Activated CD8-positive, alpha-beta T cell treated with anti-CD3 and anti-CD28 coated beads for 36 hours (primary cell): ENCODE measurements at regions of chr16 and their contacts with region 1.

Region 1: GRCh38 chr16:84617791-84618580 is at the start of gene COTL1:
- DNase-seq: peak; percentile 99
- ATAC-seq: peak; percentile 82
- H3K4me3 Mint-ChIP-seq: peak within 1 kb of the TSS; percentile 97
- H3K27ac Mint-ChIP-seq: peak within 1 kb of the TSS; percentile 86
- H3K4me1 Mint-ChIP-seq: peaks cover 36% of the 10 kb centered on the region
- H3K27me3 Mint-ChIP-seq: no peaks in the 10 kb centered on the region
- CTCF ChIP-seq: no peak
- total RNA-seq, gene COTL1: 664 to 677 TPM

Region 2: DNA sequence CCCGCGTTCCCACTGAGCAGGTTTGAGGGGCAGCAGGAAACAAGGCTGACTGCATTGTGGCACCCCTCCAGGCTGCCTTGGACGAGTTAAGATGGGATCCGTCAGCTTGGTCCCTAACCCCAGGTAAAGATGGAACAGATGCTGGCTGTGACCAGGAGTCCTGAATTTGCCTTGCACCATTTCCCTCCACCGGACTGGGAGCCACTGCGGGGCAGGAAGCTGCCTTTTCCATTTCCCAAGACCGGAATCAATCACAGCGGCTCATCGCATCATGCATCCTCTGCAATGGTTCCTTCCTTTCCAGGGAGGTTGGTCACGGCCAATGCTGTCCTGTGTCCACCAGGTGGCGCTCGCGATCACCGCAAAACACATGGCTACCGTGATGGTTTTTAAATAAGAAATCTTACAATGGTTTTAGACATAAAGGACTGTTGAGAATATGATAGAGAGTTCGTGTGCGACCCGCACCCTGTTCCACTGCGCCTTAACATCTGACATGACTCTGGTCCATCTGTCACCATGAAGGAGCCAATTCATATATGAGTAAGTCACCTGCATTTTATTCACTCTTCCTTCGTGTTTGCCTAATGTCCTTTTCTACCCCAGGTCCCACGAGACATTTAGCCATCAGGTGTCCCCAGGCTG is 106.7 kb before region 1 on chr16:
- CTCF ChIA-PET with region 1: interaction called, 145 read pairs
- POLR2A ChIA-PET with region 1: interaction called, 19 read pairs
- intact Hi-C with region 1: loop called (anchors 1 kb)
- DNase-seq: peak; percentile 92
- ATAC-seq: peak; percentile 9
- H3K4me3 Mint-ChIP-seq: peak overlapping the region; percentile 39
- H3K27ac Mint-ChIP-seq: peak overlapping the region; percentile 80
- H3K4me1 Mint-ChIP-seq: peaks cover 74% of the 10 kb centered on the region
- H3K27me3 Mint-ChIP-seq: no peaks in the 10 kb centered on the region
- CTCF ChIP-seq: peak; percentile 94

Region 3: DNA sequence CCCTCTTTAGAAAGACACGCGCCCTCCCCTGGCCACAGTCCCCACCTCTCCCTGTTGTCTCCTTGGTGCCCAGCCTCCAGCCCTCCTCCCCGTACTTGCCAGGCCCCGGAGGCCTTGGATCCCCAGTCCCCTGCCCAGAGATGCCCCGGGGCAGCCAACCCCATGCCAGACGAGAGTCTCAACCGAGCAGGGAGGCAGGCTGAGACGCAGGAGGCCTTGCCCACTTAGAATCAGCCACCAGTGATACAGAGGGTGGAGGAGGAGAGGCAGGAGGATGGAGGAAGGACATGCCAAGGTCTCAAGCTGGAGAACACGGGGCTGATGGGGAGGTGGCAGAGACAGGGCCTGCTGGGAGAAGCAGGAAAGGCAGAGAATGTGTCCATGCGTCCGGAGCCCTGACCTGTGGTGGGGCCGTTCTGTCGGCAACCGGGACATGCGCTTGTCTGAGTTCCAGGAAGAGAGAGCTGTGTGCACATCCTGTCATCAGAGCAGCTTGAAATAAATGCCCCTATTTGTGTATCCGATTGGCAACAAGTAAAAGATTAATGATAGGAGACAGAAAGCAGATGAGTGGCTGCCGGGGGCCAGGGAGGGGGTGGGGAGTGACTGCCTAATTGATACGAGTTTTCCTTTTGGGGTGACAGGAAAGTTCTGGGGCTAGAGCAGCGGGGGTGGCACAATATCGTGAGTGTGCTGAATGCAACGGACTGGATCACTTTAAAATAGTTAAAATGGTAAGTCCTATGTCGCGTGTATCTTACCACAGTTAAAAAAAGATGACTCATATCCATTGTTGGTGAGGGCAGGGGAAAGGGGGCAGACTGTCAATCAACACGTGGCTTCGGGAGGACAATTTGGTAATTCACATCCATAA is 68.8 kb before region 1 on chr16:
- CTCF ChIA-PET with region 1: interaction called, 14 read pairs
- POLR2A ChIA-PET with region 1: interaction called, 16 read pairs
- intact Hi-C with region 1: loop called (anchors 5 kb)
- DNase-seq: peak; percentile 82
- ATAC-seq: peak; percentile 57
- H3K4me3 Mint-ChIP-seq: peak overlapping the region; percentile 84
- H3K27ac Mint-ChIP-seq: peak overlapping the region; percentile 98
- H3K4me1 Mint-ChIP-seq: peaks cover 54% of the 10 kb centered on the region
- H3K27me3 Mint-ChIP-seq: no peaks in the 10 kb centered on the region
- CTCF ChIP-seq: peak; percentile 19

Region 4: DNA sequence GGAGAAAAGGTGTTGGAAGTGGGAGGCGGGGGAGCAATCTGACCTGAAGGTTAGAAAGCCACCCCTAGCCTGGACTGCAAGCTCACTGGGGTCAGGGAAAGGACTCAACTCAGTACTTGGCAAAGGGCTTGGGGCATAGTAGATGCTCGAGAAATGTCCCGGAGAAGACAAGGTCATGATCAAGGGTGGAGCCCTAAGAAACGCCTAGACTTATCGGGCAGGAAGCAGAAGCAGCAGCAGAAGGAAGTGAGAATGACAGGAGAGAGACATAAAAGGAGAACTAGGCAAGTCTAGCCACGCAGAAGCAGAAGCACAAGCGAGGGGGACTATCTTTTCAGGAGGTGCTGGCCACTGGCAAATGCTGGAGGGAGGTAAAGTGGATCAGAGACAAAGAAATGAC is 10.3 kb before region 1 on chr16:
- CTCF ChIA-PET with region 1: interaction called, 24 read pairs
- POLR2A ChIA-PET with region 1: interaction called, 94 read pairs
- intact Hi-C with region 1: loop called (anchors 1 kb)
- DNase-seq: no peak
- ATAC-seq: peak; percentile 17
- H3K4me3 Mint-ChIP-seq: peak overlapping the region; percentile 43
- H3K27ac Mint-ChIP-seq: peak overlapping the region; percentile 81
- H3K4me1 Mint-ChIP-seq: peaks cover 92% of the 10 kb centered on the region
- H3K27me3 Mint-ChIP-seq: no peaks in the 10 kb centered on the region
- CTCF ChIP-seq: no peak

Region 5: DNA sequence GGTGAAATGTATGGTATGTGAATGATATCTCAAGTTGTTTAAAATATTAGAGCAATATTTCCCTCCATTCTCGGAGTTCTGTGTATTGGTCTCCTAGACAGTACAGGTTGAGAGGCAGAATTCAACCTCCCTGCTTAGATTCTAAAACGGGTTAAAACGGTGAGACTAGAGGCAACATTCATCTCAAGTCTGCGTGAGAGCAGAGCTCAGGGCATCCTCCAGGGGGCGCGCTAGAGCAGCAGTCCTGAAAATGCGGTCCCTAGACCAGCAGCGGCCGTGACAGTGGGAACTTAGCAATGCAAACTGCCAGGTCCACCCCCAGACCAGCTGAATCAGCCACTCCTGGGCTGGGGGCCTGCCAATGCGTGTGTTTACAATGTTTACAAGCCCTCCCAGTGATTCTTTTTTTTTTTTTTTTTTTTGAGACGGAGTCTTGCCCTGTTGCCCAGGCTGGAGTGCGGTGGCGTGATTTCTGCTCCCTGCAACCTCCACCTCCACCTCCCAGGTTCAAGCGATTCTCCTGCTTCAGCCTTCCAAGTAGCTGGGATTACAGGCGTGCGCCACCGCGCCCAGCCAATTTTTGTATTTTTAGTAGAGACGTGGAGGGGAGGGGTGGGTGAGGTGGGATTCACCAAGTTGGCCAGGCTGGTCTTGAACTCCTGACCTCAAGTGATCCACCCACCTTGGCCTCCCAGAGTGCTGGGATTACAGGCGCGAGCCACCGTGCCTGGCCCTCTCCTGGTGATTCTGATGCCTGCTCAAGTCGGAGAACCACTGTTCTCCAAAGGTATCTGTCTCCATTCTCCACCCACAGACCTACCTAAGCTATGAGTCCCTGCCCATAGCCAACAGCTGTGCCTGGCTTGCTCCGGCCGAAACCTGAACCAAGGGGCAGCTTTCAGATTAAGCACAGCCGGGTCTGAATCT is 54.6 kb after region 1 on chr16:
- CTCF ChIA-PET with region 1: interaction called, 12 read pairs
- POLR2A ChIA-PET with region 1: no interaction called
- intact Hi-C with region 1: no loop called
- DNase-seq: peak; percentile 86
- ATAC-seq: peak; percentile 97
- H3K4me3 Mint-ChIP-seq: no peak overlapping the region
- H3K27ac Mint-ChIP-seq: no peak overlapping the region
- H3K4me1 Mint-ChIP-seq: peaks cover 6% of the 10 kb centered on the region
- H3K27me3 Mint-ChIP-seq: no peaks in the 10 kb centered on the region
- CTCF ChIP-seq: peak; percentile 90

Region 6: DNA sequence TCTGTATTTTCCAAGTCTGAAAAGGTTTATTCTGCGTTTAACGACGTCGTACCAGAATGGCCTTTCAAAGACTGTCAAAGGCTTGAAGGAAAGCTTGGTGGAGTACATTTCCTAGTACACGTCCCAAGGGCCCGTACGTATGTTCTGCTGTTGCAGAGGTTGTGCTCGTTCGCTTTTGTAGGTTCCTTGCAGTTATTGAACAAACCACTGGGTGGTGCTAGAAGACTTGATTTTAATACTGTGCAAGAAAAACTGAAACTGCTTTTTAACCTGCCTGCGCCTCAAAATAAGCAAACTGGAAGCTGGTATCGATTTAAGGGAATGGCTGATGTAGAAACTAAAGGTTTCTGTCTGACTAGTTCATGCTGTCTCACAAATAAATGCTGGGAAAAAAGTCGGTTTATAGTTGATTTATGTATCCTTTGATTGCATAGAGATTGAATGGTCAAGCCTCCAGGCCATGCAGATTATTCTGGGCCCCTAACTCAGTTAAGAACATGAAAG is 136.4 kb after region 1 on chr16:
- CTCF ChIA-PET with region 1: interaction called, 10 read pairs
- POLR2A ChIA-PET with region 1: no interaction called
- intact Hi-C with region 1: no loop called
- DNase-seq: peak; percentile 78
- ATAC-seq: peak; percentile 84
- H3K4me3 Mint-ChIP-seq: no peak overlapping the region
- H3K27ac Mint-ChIP-seq: peak overlapping the region; percentile 13
- H3K4me1 Mint-ChIP-seq: peaks cover 83% of the 10 kb centered on the region
- H3K27me3 Mint-ChIP-seq: no peaks in the 10 kb centered on the region
- CTCF ChIP-seq: peak; percentile 89

Region 7: GRCh38 chr16:84774810-84775209 is 156.8 kb after region 1 on chr16:
- CTCF ChIA-PET with region 1: no interaction called
- POLR2A ChIA-PET with region 1: no interaction called
- intact Hi-C with region 1: no loop called
- DNase-seq: no peak
- ATAC-seq: no peak
- H3K4me3 Mint-ChIP-seq: no peak overlapping the region
- H3K27ac Mint-ChIP-seq: no peak overlapping the region
- H3K4me1 Mint-ChIP-seq: no peaks in the 10 kb centered on the region
- H3K27me3 Mint-ChIP-seq: no peaks in the 10 kb centered on the region
- CTCF ChIP-seq: no peak